Activated CD4-positive, alpha-beta memory T cell treated with anti-CD3 and anti-CD28 coated beads, Interleukin-2, amount 10 ng/mL, durations not matched to agents 7 days and 5 days (primary cell): ENCODE measurements at regions of chr3 and their contacts with region 1.

Region 1: GRCh38 chr3:113287803-113288648 is 76.7 kb downstream of the BOC start:
- DNase-seq: peak; percentile 46
- H3K4me3 Mint-ChIP-seq: no peak overlapping the region
- H3K27ac Mint-ChIP-seq: no peak overlapping the region
- H3K4me1 Mint-ChIP-seq: no peaks in the 10 kb centered on the region
- H3K27me3 Mint-ChIP-seq: no peaks in the 10 kb centered on the region

Region 2: DNA sequence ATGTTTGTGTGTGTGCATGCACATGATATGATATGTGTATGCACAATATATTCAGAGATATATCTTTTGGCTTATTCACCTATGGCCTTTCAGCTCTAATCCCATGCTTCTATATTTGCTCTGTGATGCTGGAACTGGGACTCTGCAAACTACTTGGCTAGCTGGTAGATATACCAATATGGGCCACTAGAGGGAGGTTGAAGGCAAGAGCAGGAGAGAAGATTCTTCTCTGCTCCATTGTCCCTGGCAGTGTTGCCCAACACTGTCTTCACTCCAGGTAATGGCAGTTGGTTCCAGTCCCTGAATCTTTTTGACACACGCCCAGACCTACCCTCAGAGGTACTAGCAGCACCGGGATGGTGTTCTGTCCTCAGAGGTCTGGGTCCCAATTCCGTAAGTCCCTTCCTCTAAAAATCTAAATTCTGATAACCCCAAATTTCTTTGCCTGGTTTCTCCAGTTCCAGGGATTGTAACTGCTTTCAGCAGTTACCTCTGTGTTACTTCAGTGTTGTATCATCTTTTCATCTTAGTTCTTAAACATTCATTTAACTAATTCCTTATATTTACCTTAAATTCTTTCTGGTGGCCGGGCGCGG is 252.5 kb before region 1 on chr3:
- CTCF ChIA-PET with region 1: interaction called, 10 read pairs
- POLR2A ChIA-PET with region 1: no interaction called
- DNase-seq: peak; percentile 32
- H3K4me3 Mint-ChIP-seq: no peak overlapping the region
- H3K27ac Mint-ChIP-seq: no peak overlapping the region
- H3K4me1 Mint-ChIP-seq: no peaks in the 10 kb centered on the region
- H3K27me3 Mint-ChIP-seq: no peaks in the 10 kb centered on the region

Region 3: GRCh38 chr3:113051302-113051711 is 236.7 kb before region 1 on chr3:
- CTCF ChIA-PET with region 1: interaction called, 17 read pairs
- POLR2A ChIA-PET with region 1: no interaction called
- DNase-seq: peak; percentile 89
- H3K4me3 Mint-ChIP-seq: no peak overlapping the region
- H3K27ac Mint-ChIP-seq: no peak overlapping the region
- H3K4me1 Mint-ChIP-seq: peaks cover 3% of the 10 kb centered on the region
- H3K27me3 Mint-ChIP-seq: no peaks in the 10 kb centered on the region

Region 4: DNA sequence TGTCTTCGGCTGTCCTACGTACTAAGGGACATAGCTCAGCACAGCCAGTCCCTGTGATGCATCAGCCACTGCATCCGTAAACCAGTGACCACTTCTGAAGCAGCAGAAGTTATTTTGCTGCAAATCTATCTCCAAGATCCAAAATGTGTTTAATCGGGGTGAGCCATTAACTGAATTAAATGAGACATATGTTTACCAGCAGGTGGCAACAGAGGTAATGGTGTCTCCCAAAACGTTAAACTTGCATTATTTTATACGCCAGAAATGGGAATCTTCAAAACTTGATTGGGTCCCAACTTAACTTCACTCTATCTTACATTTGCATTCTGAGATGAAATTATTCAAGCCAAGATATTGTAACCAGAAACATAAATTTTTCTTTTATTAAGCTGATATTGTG is 152.0 kb before region 1 on chr3:
- CTCF ChIA-PET with region 1: interaction called, 17 read pairs
- POLR2A ChIA-PET with region 1: no interaction called
- DNase-seq: no peak
- H3K4me3 Mint-ChIP-seq: no peak overlapping the region
- H3K27ac Mint-ChIP-seq: no peak overlapping the region
- H3K4me1 Mint-ChIP-seq: peaks cover 3% of the 10 kb centered on the region
- H3K27me3 Mint-ChIP-seq: no peaks in the 10 kb centered on the region

Region 5: DNA sequence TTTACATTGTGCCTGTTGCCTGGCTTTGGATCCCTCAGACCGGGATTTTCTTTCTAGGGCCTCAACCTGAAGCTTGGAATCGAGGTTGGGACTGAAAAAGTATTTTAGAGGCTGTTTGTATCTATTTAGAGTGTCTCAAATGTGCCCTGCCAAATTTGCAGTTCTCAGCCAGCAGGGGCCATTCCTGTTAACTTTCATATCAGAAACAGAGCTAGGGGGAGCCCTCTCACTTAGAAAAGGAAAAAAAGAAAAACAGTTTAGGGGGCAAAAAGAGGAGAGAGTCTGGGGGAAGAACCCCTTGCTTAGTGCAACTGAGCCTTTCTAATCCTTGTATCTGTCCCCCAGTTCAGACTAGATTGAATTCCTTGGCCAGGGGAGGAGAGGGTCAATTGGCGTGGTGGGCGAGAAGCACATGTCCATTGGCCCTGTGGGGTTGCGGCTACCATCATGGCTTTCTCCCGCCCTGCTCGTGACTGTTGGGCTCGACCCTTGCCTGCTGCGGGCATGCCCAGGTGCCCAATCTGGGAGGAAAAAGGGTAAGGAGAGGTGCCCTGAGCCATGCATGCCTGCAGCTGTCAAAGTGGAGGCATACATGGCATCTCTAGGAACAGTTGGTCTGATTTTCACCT is 51.7 kb after region 1 on chr3:
- CTCF ChIA-PET with region 1: no interaction called
- POLR2A ChIA-PET with region 1: no interaction called
- DNase-seq: no peak
- H3K4me3 Mint-ChIP-seq: no peak overlapping the region
- H3K27ac Mint-ChIP-seq: no peak overlapping the region
- H3K4me1 Mint-ChIP-seq: no peaks in the 10 kb centered on the region
- H3K27me3 Mint-ChIP-seq: no peaks in the 10 kb centered on the region